IMR-90 (cell line): ENCODE measurements at regions of chr11 and their contacts with region 1.

Region 1: GRCh38 chr11:44911029-44911814 is 39.5 kb downstream of the TP53I11 start:
- DNase-seq: peak; percentile 75
- ATAC-seq: peak; percentile 94
- H3K4me3 ChIP-seq: no peak overlapping the region
- H3K27ac ChIP-seq: no peak overlapping the region
- H3K4me1 ChIP-seq: peaks cover 1% of the 10 kb centered on the region; the same call in 1 of the 2 replicates
- H3K27me3 ChIP-seq: peaks cover 7% of the 10 kb centered on the region; the same call in 1 of the 2 replicates
- CTCF ChIP-seq: peak; percentile 77
- POLR2A ChIP-seq: no peak
- RAD21 ChIP-seq: peak; percentile 71

Region 2: GRCh38 chr11:44110231-44110679 is 801.0 kb before region 1 on chr11:
- CTCF ChIA-PET with region 1: no interaction called
- POLR2A ChIA-PET with region 1: no interaction called
- dilution Hi-C with region 1: no loop called
- in situ Hi-C with region 1: loop called (anchors 25 kb)
- intact Hi-C with region 1: no loop called
- DNase-seq: peak; percentile 40
- ATAC-seq: peak; percentile 86
- H3K4me3 ChIP-seq: no peak overlapping the region
- H3K27ac ChIP-seq: no peak overlapping the region
- H3K4me1 ChIP-seq: no peaks in the 10 kb centered on the region
- H3K27me3 ChIP-seq: no peaks in the 10 kb centered on the region
- CTCF ChIP-seq: peak; percentile 75
- POLR2A ChIP-seq: no peak
- RAD21 ChIP-seq: peak; percentile 79

Region 3: DNA sequence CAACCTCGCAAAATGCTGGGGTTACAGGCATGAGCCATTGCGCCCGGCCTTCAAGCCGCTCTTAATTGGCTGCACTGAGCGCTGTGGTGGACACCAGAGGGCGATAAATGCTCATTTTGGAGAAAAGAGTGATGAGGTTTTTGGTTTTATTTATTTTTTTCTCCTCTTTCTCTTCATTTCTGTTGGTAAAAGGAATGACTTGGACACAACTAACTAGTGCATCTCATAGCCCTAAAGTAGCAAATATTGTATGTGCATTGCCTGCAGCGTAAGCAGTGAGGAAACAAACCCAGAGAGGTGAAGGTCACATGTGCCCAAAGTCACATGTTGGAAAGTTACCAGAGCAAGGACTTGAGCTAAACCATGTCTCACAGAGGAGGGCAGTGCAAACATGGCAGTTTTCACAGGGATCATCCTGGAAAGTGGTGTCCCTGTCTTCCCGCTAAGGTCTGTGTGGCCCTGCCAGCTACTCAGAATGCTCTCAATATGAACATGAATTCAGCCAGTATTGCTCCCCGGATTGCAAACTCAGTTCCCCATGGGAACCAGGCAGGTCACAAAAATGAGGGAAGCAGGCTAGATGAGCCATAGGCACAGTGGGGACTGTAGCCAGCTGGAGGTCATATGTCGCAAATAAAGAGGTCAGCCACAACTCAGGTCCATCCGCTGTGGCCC is 354.4 kb before region 1 on chr11:
- CTCF ChIA-PET with region 1: interaction called, 7 read pairs
- POLR2A ChIA-PET with region 1: no interaction called
- dilution Hi-C with region 1: no loop called
- in situ Hi-C with region 1: no loop called
- intact Hi-C with region 1: loop called (anchors 2 kb)
- DNase-seq: peak; percentile 59
- ATAC-seq: peak; percentile 82
- H3K4me3 ChIP-seq: no peak overlapping the region
- H3K27ac ChIP-seq: no peak overlapping the region
- H3K4me1 ChIP-seq: no peaks in the 10 kb centered on the region
- H3K27me3 ChIP-seq: no peaks in the 10 kb centered on the region; the same call in 1 of the 2 replicates
- CTCF ChIP-seq: peak; percentile 84
- POLR2A ChIP-seq: no peak
- RAD21 ChIP-seq: peak; percentile 90

Region 4: DNA sequence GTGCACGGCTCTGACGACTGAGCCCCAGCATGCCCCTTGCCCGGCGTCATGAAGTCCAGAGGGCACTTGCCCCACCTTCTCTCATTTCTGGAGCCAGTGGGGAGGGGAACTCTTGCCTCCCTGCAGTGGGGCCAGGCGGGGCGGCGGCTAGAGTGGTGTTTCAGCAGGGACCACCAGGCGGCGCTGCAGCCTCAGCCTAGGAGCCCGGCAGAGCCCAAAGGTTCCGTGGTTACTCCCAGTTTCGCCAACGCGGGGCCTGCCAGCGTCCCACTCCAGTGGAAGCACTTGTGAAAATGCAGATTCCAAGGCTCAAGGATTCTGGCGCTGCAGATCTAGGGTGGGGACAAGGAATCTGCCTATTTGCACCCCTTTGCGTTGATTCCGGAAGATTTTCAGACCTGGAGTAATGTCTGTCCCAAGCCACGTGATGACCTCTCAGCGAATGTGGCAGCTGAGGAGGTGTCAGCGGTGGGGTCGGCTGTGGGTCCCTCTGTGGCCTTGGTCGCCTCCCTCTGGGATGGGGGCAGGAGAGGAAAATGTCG is 290.0 kb before region 1 on chr11:
- CTCF ChIA-PET with region 1: interaction called, 6 read pairs
- POLR2A ChIA-PET with region 1: no interaction called
- dilution Hi-C with region 1: no loop called
- in situ Hi-C with region 1: no loop called
- intact Hi-C with region 1: loop called (anchors 1 kb)
- DNase-seq: peak; percentile 41
- ATAC-seq: peak; percentile 88
- H3K4me3 ChIP-seq: no peak overlapping the region
- H3K27ac ChIP-seq: no peak overlapping the region
- H3K4me1 ChIP-seq: no peaks in the 10 kb centered on the region; the same call in 1 of the 2 replicates
- H3K27me3 ChIP-seq: no peaks in the 10 kb centered on the region
- CTCF ChIP-seq: peak; percentile 90
- POLR2A ChIP-seq: no peak
- RAD21 ChIP-seq: peak; percentile 97

Region 5: DNA sequence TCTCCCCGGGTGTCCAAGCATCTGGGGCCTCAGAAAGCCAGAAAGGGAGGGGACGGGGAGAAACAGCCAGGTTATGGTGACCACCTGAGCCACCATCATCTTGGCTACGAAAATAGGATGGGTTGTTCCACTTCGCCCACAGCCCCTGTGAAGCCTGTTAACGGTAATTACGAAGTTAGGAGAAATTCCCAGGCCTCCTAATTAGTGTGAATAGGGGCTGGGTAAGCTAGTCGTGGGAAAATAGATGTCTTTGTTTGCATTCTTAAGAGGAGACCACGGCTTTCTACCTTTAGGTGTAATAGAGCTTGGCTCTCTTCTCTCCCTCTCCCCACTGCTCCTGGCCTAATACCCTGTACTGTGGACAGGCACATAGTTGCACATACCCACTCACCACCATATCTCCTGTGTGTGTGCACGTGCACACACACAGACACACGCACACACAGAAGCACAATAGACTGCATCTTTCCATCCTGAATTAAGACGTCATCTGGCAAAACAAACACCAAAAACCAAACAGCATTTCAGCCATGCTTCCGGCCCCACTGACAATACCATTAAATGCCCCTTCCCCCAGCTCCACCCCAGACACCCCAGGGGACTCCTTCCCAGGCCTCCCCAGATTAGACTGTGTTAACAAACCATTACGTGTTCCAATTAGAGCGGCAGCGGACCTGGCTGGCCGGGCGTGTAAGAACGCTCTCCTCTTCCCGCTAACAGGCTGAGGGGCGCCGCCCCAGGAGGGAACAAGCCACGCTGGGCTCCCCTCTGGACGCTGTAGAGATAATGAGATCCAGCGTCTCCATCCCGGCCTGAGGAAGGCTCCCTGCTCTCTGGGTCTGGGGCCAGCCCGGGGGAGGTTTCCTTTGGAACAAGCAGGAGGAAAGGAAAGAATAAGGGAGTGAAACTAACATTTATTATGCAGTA is 33.4 kb before region 1 on chr11:
- CTCF ChIA-PET with region 1: no interaction called
- POLR2A ChIA-PET with region 1: no interaction called
- dilution Hi-C with region 1: no loop called
- in situ Hi-C with region 1: no loop called
- intact Hi-C with region 1: no loop called
- DNase-seq: no peak
- ATAC-seq: no peak
- H3K4me3 ChIP-seq: no peak overlapping the region
- H3K27ac ChIP-seq: no peak overlapping the region
- H3K4me1 ChIP-seq: no peaks in the 10 kb centered on the region
- H3K27me3 ChIP-seq: peaks cover 50% of the 10 kb centered on the region
- CTCF ChIP-seq: no peak
- POLR2A ChIP-seq: no peak
- RAD21 ChIP-seq: no peak

Region 6: GRCh38 chr11:45147017-45147728 is 236.0 kb after region 1 on chr11:
- CTCF ChIA-PET with region 1: no interaction called
- POLR2A ChIA-PET with region 1: no interaction called
- dilution Hi-C with region 1: no loop called
- in situ Hi-C with region 1: no loop called
- intact Hi-C with region 1: no loop called
- DNase-seq: peak; percentile 94
- ATAC-seq: peak; percentile 96
- H3K4me3 ChIP-seq: peak overlapping the region; percentile 90
- H3K27ac ChIP-seq: peak overlapping the region; percentile 77
- H3K4me1 ChIP-seq: peaks cover 2% of the 10 kb centered on the region; the same call in 1 of the 2 replicates
- H3K27me3 ChIP-seq: peaks cover 3% of the 10 kb centered on the region
- CTCF ChIP-seq: no peak
- POLR2A ChIP-seq: peak; percentile 82; the same call in 1 of the 2 replicates
- RAD21 ChIP-seq: no peak